Posterior cingulate gyrus (tissue), 11 donors: ENCODE measurements at regions of chr16 and their contacts with region 1.

Region 1: GRCh38 chr16:50210266-50211038 is 55.9 kb upstream of the ADCY7 start:
- DNase-seq: peak; percentile 35 to 96 (median 78)

Region 2: DNA sequence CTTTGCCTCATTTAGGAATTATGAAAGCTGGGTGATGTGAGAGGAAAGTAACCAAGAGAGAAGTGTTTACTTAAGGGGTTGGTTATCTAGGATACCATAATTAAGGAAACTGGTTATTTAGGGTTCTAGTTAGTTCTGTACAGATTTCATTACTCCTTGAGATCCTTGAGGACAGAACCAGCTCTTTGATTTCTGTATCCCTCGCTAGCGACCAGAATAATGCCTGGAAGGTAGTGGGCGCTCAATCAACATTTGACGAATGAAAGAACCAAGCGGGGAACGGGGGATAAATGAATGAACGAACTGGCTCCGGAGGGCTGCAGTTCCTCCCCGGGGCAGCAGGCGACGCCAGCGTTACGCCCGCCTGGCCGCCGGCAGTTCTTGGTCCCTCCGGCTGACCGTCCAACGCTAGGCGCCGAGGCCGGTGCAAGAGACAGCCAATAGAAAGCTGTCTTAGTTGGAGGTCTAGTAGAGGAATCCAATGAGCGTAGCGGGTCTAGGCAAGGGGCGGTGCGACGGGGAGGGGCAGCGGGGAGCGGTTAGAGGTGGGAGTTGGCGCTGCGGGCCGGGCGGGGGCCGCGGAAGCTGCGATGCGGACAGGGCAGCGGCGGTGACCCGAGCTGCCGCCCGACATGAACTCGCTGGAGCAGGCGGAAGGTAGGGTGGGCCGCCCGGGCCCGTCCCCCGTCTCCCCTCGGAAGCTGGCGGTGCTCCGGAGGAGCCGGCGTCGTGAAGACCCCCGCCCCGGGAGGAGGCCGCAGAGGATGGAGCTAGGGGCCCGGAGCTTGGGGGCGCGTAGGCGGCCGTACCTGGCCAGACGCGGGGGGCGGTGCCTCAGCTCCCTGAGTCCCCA is 185.5 kb before region 1 on chr16 and contains the start of gene CNEP1R1:
- intact Hi-C with region 1: loop called (anchors 2 kb)
- DNase-seq: peak; percentile 89 to 99 (median 92)

Region 3: GRCh38 chr16:50065624-50066481 is 144.6 kb before region 1 on chr16 and contains the start of gene HEATR3:
- intact Hi-C with region 1: loop called (anchors 2 kb)
- DNase-seq: peak; percentile 88 to 99 (median 92)

Region 4: DNA sequence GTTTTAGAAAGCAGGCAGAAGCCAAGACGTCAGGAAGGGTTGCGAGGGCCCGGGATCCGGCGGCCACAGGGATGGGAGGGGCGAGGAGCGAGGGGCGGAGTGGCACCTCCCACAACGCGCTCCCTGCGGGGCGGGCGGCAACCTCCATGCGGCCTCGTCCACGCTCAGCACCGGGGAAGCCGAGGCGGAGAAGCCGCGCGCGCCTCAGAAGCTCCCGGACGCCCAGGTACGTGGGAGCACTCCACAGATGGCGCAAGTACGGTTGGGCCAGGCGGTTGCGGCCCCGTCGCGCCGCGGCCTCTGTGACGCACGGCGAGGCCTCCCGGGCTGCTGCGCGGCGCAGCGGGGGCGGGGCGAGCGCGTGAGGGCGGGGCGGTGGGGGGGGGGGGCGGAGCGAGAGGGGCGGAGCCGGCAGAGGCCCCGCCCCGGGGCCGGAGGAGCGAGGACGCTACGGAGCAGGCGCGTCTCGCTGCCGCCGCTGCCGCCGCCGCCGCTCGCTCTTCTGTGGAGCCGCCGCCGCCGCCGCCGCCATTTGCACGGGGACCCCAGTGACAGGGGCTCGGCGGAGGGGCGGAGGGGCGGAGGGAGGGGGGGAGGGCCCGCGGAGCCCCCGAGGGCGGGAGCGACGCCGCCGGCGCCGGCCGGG is 57.5 kb before region 1 on chr16 and contains the start of gene TENT4B:
- intact Hi-C with region 1: loop called (anchors 2 kb)
- DNase-seq: peak; percentile 77 to 98 (median 84)

Region 5: GRCh38 chr16:50323335-50324011 is 113.0 kb after region 1 on chr16:
- intact Hi-C with region 1: no loop called
- DNase-seq: peak in 1 of 10 donors; percentile 40

Region 6: DNA sequence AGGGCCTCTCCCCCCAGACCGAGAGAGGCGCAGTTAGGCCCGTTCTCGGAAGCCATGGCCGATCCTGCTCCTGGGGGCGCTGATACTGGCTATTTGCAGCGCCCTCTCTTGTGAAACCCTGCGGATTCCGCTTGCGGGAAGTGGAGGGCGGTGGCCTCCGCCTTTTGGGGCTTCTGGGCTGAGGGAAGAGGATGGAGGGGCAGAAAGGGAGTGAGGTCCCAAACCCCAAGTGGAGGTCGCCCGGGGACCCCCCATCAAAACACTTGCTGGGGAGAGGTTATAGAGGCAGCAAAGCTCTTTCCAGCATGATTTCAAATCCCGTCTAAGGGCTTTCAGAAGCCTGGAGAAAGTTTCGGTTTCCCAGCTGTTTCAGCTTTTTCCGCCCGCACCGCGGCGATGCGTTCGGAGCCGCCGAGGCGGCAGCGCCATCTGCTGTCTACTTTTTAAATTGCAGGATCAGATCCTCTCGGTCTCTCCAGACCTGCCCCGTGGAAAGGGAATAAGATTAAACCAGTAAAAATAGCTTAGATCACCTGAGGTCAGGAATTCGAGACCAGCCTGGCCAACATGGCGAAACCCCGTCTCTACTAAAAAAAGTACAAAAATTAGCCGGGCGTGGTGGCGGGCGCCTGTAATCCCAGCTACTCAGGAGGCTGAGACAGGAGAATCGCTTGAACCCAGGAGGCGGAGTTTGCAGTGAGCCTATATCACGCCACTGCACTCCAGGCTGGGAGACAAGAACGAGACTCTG is 454.9 kb after region 1 on chr16:
- intact Hi-C with region 1: loop called (anchors 5 kb)
- DNase-seq: peak; percentile 61 to 95 (median 84)

Region 7: GRCh38 chr16:50806099-50807062 is 595.9 kb after region 1 on chr16:
- intact Hi-C with region 1: loop called (anchors 5 kb)
- DNase-seq: peak; percentile 73 to 97 (median 88)